IMR-90 (cell line): ENCODE measurements at regions of chr2 and their contacts with region 1.

Region 1: DNA sequence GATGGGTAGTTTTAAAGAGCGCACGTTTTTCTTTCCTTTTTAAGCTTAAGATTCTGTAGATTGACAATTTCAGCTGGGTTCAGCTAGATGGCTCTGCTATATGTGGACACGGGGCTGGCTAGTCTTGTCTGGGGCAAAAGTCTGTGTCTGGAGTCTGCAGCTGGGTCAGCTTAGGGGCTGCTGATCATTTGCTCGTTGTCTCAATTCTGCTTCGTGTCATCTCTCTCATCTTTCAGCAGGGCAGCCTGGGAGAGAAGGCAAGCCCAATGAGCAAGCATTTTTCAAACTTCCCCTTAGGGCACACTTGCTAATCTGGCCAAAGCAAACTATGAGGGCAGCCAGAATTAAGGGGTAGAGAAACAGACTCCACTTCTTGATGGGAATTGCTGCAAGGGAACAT is 462.6 kb downstream of the SLC4A3 start:
- DNase-seq: no peak
- ATAC-seq: no peak
- H3K4me3 ChIP-seq: no peak overlapping the region
- H3K27ac ChIP-seq: no peak overlapping the region
- H3K4me1 ChIP-seq: no peaks in the 10 kb centered on the region
- H3K27me3 ChIP-seq: no peaks in the 10 kb centered on the region
- CTCF ChIP-seq: no peak
- POLR2A ChIP-seq: no peak
- RAD21 ChIP-seq: no peak

Region 2: DNA sequence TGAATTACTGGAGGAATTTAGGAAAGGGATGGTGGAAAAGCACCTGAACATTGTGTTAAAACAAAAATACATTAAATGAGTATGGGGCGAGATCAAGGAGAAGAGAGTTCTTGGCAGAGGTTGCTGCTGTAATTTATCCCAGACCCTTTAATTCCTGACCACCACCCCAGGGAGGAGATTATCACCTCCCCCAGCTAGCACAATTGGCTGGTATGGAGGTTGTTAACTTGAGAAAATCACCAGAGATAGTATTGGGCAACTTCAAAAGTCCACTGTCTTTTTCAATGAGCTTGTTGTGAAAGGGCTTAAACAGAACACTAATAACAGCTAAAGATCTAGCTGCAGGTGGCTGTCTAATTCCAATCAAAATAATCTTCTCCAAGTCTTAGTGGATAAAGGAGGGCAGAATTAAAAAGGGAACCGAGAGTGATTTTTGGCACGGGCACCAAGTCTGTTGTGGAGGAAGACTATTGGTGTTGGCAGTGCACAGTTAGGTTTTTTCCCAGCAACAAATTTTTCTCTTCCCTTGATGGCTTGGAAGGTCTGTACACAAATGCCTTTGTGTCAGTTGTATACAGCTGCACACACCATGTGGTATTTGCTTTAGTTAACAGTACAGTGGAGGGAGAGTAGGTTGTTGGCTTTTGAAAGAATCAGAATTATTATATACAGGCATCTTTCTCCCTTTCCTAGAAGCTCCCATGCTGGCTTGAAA is 173.1 kb before region 1 on chr2:
- CTCF ChIA-PET with region 1: no interaction called
- POLR2A ChIA-PET with region 1: no interaction called
- dilution Hi-C with region 1: no loop called
- in situ Hi-C with region 1: no loop called
- intact Hi-C with region 1: no loop called
- DNase-seq: no peak
- ATAC-seq: no peak
- H3K4me3 ChIP-seq: no peak overlapping the region
- H3K27ac ChIP-seq: no peak overlapping the region
- H3K4me1 ChIP-seq: peaks cover 2% of the 10 kb centered on the region; the same call in 1 of the 2 replicates
- H3K27me3 ChIP-seq: 0 out of 2 replicates have a peak, but pooled peaks cover 5% of the 10 kb centered on the region
- CTCF ChIP-seq: no peak
- POLR2A ChIP-seq: no peak
- RAD21 ChIP-seq: no peak

Region 3: DNA sequence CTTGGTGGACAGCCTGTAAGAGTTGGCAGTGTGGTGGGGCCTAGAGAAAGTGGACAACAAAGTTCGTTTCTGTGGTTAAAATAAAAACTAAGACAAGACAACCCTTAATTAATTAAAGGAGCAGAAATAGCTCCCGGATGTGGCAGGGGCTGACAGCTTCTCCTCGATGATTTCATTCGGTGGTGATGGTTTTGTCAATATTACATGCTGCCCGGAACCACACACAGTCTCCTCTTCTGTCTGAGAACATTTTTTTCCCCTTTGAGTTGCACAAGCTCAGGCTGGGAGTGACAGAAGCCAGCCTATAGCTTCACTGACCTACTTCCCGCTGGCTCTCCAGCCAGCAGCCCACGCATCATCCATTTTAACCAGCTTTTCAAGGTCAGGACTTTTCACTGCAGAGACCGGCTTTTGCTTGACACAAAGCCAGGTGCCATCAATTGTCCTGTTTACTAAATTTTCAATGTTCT is 83.8 kb before region 1 on chr2:
- CTCF ChIA-PET with region 1: no interaction called
- POLR2A ChIA-PET with region 1: no interaction called
- dilution Hi-C with region 1: no loop called
- in situ Hi-C with region 1: no loop called
- intact Hi-C with region 1: loop called (anchors 5 kb)
- DNase-seq: peak; percentile 70
- ATAC-seq: peak; percentile 73
- H3K4me3 ChIP-seq: no peak overlapping the region
- H3K27ac ChIP-seq: no peak overlapping the region
- H3K4me1 ChIP-seq: peaks cover 13% of the 10 kb centered on the region
- H3K27me3 ChIP-seq: no peaks in the 10 kb centered on the region
- CTCF ChIP-seq: no peak
- POLR2A ChIP-seq: no peak
- RAD21 ChIP-seq: no peak

Region 4: DNA sequence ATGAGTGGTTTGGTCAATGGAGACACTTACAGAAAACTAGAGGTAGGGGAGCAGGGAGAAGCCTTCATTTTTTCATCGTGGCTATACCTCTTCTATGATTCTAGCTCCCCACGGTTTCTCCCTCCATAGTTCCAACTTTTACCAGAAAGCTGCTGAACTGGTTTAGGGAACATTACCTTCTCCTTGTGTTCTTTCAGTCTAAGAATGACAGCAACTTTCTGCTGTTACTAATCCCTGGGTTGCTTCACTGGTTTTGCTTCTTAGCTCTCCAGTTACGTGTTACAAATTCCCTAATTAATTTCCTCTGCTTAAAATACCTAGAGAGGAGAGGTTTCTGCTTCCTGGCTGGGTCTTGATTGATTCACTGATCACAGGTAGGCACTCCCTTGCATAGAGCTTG is 37.3 kb after region 1 on chr2:
- CTCF ChIA-PET with region 1: no interaction called
- POLR2A ChIA-PET with region 1: no interaction called
- dilution Hi-C with region 1: no loop called
- in situ Hi-C with region 1: no loop called
- intact Hi-C with region 1: no loop called
- DNase-seq: no peak
- ATAC-seq: no peak
- H3K4me3 ChIP-seq: no peak overlapping the region
- H3K27ac ChIP-seq: no peak overlapping the region
- H3K4me1 ChIP-seq: no peaks in the 10 kb centered on the region
- H3K27me3 ChIP-seq: no peaks in the 10 kb centered on the region
- CTCF ChIP-seq: no peak
- POLR2A ChIP-seq: no peak
- RAD21 ChIP-seq: no peak